Naive thymus-derived CD4-positive, alpha-beta T cell (primary cell): ENCODE measurements at regions of chr14 and their contacts with region 1.

Region 1: DNA sequence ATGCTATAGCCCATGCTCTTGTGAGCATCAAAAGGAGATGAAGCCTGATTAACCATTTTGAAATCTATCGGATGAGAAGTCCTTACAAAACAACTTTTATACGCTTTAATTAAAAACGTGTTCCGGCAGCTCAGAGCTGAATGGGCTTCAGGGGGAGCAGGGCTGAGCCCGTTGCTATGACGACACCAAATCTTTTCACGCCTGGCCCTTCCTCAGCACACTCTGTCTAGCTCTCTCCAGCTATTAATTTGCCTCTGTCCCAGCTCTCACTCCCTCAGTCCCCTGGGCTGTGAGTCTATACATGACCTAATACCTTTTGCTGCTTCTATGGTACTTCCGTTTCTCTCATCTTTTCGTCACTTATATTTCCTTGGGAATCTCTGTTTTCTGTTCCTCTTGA is 15.8 kb downstream of the FOXA1 start:
- DNase-seq: no peak
- ATAC-seq: no peak
- H3K4me3 ChIP-seq: no peak overlapping the region
- H3K4me3 Mint-ChIP-seq: no peak overlapping the region
- H3K27ac ChIP-seq: no peak overlapping the region
- H3K27ac Mint-ChIP-seq: no peak overlapping the region
- H3K4me1 ChIP-seq: no peaks in the 10 kb centered on the region
- H3K4me1 Mint-ChIP-seq: no peaks in the 10 kb centered on the region
- H3K27me3 ChIP-seq: no peaks in the 10 kb centered on the region
- H3K27me3 Mint-ChIP-seq: peaks cover 15 to 39% (median 30%) of the 10 kb centered on the region in 5 donors

Region 2: GRCh38 chr14:36700656-36701055 is 878.6 kb before region 1 on chr14:
- CTCF ChIA-PET with region 1: no interaction called
- POLR2A ChIA-PET with region 1: no interaction called
- intact Hi-C with region 1: loop called in 1 of 2 experiments (anchors 10 kb)
- DNase-seq: no peak
- ATAC-seq: no peak
- H3K4me3 ChIP-seq: no peak overlapping the region
- H3K4me3 Mint-ChIP-seq: no peak overlapping the region
- H3K27ac ChIP-seq: no peak overlapping the region
- H3K27ac Mint-ChIP-seq: no peak overlapping the region
- H3K4me1 ChIP-seq: no peaks in the 10 kb centered on the region
- H3K4me1 Mint-ChIP-seq: peaks cover 0 to 2% (median 0%) of the 10 kb centered on the region in 7 donors
- H3K27me3 ChIP-seq: no peaks in the 10 kb centered on the region
- H3K27me3 Mint-ChIP-seq: peaks cover 0 to 12% (median 4%) of the 10 kb centered on the region in 5 donors